CD4-positive, alpha-beta T cell (primary cell): ENCODE measurements at regions of chr2 and their contacts with region 1.

Region 1: GRCh38 chr2:37215250-37215649 is 16.1 kb downstream of the CEBPZ start:
- DNase-seq: no peak
- ATAC-seq: no peak
- H3K4me3 ChIP-seq: no peak overlapping the region
- H3K4me3 Mint-ChIP-seq: no peak overlapping the region
- H3K27ac ChIP-seq: no peak overlapping the region
- H3K27ac Mint-ChIP-seq: no peak overlapping the region
- H3K4me1 ChIP-seq: no peaks in the 10 kb centered on the region
- H3K4me1 Mint-ChIP-seq: no peaks in the 10 kb centered on the region
- H3K27me3 ChIP-seq: no peaks in the 10 kb centered on the region
- H3K27me3 Mint-ChIP-seq: no peaks in the 10 kb centered on the region
- CTCF ChIP-seq: no peak

Region 2: DNA sequence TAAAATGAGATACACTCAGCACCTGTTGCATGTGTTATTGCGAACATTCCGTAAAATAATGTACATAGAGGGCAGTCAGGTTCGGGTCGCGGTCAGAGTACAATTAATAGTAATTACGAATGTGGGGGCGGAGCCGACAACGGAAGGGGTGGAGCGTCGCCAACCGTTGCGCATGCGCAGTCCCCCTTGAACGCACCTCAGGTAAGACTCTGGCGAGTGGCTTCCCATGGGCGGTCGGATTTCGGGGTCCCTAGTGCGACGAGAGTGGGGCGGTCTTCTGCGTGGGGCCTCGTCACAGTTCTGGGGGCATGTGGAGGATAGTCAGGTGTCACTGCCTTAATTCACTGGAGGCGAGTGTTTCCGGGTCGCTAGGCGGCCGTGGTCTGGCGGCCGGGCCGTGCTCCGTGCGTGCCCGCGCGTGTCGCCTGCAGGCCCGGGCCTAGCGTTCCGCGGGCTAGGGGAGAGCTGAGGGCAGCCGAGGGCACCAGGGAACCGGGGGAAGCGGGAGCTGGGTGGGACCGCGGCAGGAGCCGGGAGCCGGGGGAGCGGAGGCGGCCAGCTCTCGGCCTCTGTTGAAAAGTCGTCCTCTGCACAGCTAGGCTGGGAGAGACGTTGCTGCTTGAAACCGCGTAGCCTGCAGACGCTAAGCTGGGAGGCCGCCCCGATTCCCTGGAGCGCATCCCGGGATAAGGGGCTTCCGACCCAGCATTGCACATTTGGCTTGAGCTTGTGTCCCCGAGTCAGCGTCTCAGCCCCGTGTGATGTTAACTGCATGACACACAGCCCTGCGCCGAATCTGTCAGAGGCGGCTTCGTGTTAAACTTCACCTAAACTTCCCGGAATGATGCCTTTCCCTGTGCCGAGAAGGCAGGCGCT is 18.7 kb before region 1 on chr2 and contains the start of gene CEBPZOS:
- CTCF ChIA-PET with region 1: no interaction called
- POLR2A ChIA-PET with region 1: interaction called, 10 read pairs
- intact Hi-C with region 1: no loop called
- DNase-seq: peak; percentile 81 to 94 (median 90)
- ATAC-seq: peak; percentile 87
- H3K4me3 ChIP-seq: peak within 1 kb of the TSS; percentile 87
- H3K4me3 Mint-ChIP-seq: peak within 1 kb of the TSS; percentile 99
- H3K27ac ChIP-seq: peak within 1 kb of the TSS; percentile 70 to 82
- H3K27ac Mint-ChIP-seq: peak within 1 kb of the TSS; percentile 95
- H3K4me1 ChIP-seq: peaks cover 34% of the 10 kb centered on the region
- H3K4me1 Mint-ChIP-seq: peaks cover 35% of the 10 kb centered on the region
- H3K27me3 ChIP-seq: no peaks in the 10 kb centered on the region
- H3K27me3 Mint-ChIP-seq: no peaks in the 10 kb centered on the region
- CTCF ChIP-seq: no peak
- total RNA-seq, gene CEBPZOS: 23.4 to 24.6 TPM